ENCODE measurements at regions of chr6 and their contacts with region 1.

Region 1: DNA sequence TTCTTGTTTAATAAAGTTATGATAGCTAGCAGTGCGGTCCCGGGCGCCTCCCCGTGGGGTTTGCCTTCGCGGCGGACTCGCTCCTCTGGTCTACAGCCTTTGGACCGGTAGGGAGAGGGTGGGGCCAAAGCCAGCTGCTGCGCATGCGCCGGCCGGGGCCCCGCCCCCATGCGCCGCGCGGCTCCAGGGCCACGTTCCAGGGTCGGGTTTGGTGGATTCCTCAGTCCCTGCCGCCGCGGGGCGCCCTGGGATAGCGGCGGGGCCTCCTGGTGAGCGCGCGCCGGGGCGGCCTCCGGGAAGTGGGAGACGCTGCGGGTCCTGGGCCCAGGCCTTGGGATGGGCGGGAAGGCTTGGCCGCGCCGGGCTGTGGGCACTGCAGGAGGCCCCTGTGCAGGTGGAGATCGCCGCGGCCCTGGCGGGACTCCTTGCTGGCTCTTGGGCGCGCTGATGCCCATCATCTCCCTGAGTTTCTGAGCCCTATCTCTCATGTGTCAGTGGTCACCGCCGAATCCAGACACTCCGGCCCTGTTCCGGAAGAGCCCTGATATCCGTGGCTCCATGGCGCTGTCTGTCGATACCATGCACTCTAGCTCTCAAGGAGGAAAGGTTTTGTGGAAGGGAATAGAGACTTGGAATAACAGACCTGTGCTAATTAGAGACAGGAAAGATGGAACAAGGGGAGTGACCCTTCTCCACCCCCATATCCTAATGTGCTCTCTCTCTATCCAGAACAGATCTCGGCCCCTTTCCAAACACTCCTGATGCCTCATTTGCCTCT is at the start of gene VARS2:
- DNase-seq: peak; percentile 94
- ATAC-seq: peak; percentile 97
- total RNA-seq, gene VARS2: 17.2 TPM

Region 2: GRCh38 chr6:30686908-30687658 is 227.2 kb before region 1 on chr6:
- intact Hi-C with region 1: no loop called
- DNase-seq: peak; percentile 99
- ATAC-seq: peak; percentile 77

Region 3: GRCh38 chr6:31042806-31043205 is 128.5 kb after region 1 on chr6:
- intact Hi-C with region 1: loop called (anchors 10 kb)
- DNase-seq: no peak
- ATAC-seq: peak; percentile 78

Region 4: DNA sequence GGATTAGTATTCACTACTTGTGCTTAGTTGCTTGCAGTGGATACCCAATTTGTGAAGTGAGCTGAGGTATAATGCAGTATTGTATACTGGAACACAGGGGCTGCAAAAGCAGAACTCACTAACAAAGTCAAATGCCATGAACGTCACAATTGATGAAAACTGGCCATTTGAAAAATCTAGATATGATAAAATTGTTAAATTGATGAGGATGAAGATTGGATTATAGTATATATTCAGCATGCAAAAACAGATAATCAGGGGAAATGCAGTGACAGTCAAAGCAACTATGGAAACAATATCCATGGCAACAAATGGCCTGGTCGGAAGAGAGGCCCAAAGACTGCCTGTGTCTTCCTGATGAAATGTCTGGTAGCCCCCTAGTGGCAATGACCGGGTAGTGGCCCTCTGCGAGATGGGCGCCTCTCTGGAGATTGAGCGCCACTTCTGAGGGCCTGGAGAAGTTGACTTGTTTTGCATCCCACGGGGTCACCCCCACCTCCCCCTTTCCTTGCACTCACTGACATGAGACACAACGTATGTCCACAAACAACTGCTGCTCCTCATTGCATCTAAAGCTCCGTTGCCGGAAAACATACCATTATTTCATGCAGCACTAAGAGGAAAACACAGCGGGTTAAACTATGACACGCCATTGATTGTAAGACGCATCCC is 154.5 kb after region 1 on chr6:
- intact Hi-C with region 1: loop called (anchors 5 kb)
- DNase-seq: peak; percentile 79
- ATAC-seq: peak; percentile 93